PC-9 (cell line): ENCODE measurements at regions of chr5 and their contacts with region 1.

Region 1: DNA sequence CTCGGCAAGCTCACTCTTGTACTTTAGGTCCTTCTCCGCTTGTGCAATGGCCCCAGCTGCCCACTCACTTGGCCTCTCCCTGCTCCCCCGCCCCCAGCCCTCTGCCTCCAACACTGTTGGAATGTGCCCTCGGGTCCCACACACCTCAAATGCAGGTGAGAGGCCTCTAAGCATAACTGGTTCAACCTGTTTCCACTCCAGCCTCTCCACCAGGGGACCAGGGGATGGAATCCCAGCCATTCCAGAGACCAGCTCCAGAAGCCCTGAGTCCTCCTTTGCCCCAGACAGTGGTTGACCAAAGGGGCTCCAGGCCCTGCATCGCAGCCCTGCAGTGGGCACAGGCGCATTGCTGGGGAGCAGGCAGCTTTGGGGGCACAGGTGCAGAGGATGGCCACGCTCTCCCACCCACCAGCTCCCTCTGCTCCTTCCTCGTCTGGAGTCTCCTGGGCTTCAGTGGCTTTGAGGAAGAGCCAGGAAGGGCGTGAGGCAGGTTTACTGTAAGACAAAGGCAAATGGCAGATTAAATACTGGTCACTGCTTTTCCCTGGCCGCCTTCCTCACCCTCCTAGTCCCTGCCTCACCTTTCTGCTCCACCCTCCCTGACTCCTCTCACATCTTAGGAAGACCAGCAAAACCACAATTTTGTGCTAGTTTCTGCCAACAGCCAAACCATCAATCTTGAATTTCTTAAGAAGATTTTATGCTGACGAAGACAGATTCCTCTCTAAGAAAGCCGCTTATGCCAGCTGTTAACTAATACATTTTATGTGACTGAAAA is 29.1 kb upstream of the IRX2 start:
- DNase-seq: peak; percentile 37 to 98
- H3K4me3 ChIP-seq: peak overlapping the region; percentile 51
- H3K27ac ChIP-seq: peak overlapping the region; percentile 93
- H3K4me1 ChIP-seq: peaks cover 51% of the 10 kb centered on the region
- H3K27me3 ChIP-seq: no peaks in the 10 kb centered on the region
- CTCF ChIP-seq: no peak

Region 2: DNA sequence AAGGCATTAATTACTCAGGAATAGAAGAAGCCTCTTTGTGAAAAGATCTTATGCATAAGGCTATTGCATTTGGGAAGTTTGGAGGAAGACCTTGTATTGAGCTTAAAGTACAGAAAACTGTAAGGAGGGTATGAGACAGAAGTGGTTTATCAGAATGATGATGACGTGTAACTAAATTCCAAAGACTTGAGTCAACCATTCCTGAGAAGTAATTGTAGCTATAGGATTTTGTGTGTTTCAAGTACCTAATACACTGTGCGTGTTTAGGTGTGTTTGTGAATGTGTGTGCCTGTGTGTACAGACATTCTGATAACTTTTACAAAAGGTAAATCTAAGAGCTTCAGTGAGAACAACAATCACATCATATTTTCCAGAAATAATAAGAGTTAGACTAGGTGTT is 17.4 kb after region 1 on chr5:
- CTCF ChIA-PET with region 1: interaction called, 18 read pairs
- POLR2A ChIA-PET with region 1: no interaction called
- intact Hi-C with region 1: no loop called
- DNase-seq: peak in 1 of 2 experiments; percentile 73
- H3K4me3 ChIP-seq: no peak overlapping the region
- H3K27ac ChIP-seq: no peak overlapping the region
- H3K4me1 ChIP-seq: peaks cover 11% of the 10 kb centered on the region
- H3K27me3 ChIP-seq: no peaks in the 10 kb centered on the region
- CTCF ChIP-seq: no peak

Region 3: GRCh38 chr5:2981035-2981434 is 200.5 kb after region 1 on chr5:
- CTCF ChIA-PET with region 1: no interaction called
- POLR2A ChIA-PET with region 1: no interaction called
- intact Hi-C with region 1: no loop called
- DNase-seq: no peak
- H3K4me3 ChIP-seq: no peak overlapping the region
- H3K27ac ChIP-seq: no peak overlapping the region
- H3K4me1 ChIP-seq: no peaks in the 10 kb centered on the region
- H3K27me3 ChIP-seq: peaks cover 73% of the 10 kb centered on the region
- CTCF ChIP-seq: no peak

Region 4: GRCh38 chr5:3376611-3377010 is 596.0 kb after region 1 on chr5:
- CTCF ChIA-PET with region 1: interaction called, 11 read pairs
- POLR2A ChIA-PET with region 1: no interaction called
- intact Hi-C with region 1: no loop called
- DNase-seq: no peak
- H3K4me3 ChIP-seq: no peak overlapping the region
- H3K27ac ChIP-seq: no peak overlapping the region
- H3K4me1 ChIP-seq: no peaks in the 10 kb centered on the region
- H3K27me3 ChIP-seq: peaks cover 36% of the 10 kb centered on the region
- CTCF ChIP-seq: no peak